Left lung (tissue), 14 donors: ENCODE measurements at regions of chr1 and their contacts with region 1.

Region 1: GRCh38 chr1:115112496-115113375 is 23.4 kb upstream of the TSPAN2 start:
- DNase-seq: peak in 2 of 4 donors; percentile 31 to 74
- ATAC-seq: peak; percentile 66
- H3K4me3 ChIP-seq: no peak overlapping the region
- H3K27ac ChIP-seq: no peak overlapping the region
- H3K4me1 ChIP-seq: peaks cover 0 to 14% of the 10 kb centered on the region in 2 donors
- H3K27me3 ChIP-seq: no peaks in the 10 kb centered on the region
- CTCF ChIP-seq: peak; percentile 91 to 97

Region 2: GRCh38 chr1:114979278-114979891 is 133.4 kb before region 1 on chr1:
- intact Hi-C with region 1: loop called (anchors 5 to 10 kb)
- DNase-seq: peak in 2 of 4 donors; percentile 19 to 54
- ATAC-seq: peak; percentile 81
- H3K4me3 ChIP-seq: no peak overlapping the region
- H3K27ac ChIP-seq: no peak overlapping the region
- H3K4me1 ChIP-seq: no peaks in the 10 kb centered on the region
- H3K27me3 ChIP-seq: no peaks in the 10 kb centered on the region
- CTCF ChIP-seq: peak; percentile 77 to 84

Region 3: DNA sequence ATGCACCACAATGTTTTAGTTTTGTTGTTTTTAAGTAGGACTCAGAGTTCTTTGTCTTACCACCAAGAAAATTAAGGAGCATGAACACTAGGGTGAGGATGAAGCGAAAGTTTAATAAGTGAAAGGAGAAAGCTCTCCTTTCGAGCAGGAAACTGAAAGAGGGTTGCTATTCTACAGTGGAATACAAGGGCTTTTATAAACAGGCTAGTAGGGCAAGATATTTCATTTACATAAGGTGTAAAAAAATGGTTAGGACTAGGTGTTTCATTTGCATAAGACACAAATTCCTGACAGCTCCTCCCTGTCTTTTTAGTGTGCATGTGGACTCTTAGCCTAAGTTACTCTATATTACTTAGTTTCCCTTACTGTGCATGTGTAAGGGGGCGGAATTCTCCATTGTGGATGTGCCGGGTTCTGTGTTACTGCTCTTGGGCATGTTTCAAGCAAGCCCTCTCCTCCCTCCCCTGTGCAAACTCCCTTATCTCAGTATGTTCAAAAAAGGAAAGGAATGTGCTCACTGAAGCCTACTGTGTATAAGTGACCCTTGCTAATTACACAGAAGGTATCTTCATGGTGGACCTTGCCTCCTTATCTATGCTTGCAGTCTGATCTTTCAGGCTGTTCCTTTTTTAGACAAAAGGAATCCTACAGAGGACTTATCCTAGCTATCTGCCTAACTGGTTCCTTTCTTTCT is 75.8 kb before region 1 on chr1:
- intact Hi-C with region 1: no loop called
- DNase-seq: no peak
- ATAC-seq: peak; percentile 90
- H3K4me3 ChIP-seq: no peak overlapping the region
- H3K27ac ChIP-seq: no peak overlapping the region
- H3K4me1 ChIP-seq: no peaks in the 10 kb centered on the region
- H3K27me3 ChIP-seq: no peaks in the 10 kb centered on the region
- CTCF ChIP-seq: no peak